ENCODE measurements at regions of chr1 and their contacts with region 1.

Region 1: GRCh38 chr1:145978854-145979759 is 14.6 kb downstream of the POLR3GL start:
- DNase-seq: peak; percentile 98 to 99
- ATAC-seq: peak; percentile 75 to 76
- H3K4me3 ChIP-seq: peak overlapping the region; percentile 36 to 47 (median 42)
- H3K27ac ChIP-seq: peak overlapping the region; percentile 95 to 99 (median 98)
- H3K4me1 ChIP-seq: peaks cover 62% of the 10 kb centered on the region in 2 donors
- H3K27me3 ChIP-seq: no peaks in the 10 kb centered on the region
- CTCF ChIP-seq: peak in 4 of 5 experiments; percentile 29 to 42 (median 31)
- POLR2A ChIP-seq: peak; percentile 72 to 91

Region 2: GRCh38 chr1:145425436-145426029 is 553.6 kb before region 1 on chr1 and contains the start of gene NBPF20:
- in situ Hi-C with region 1: no loop called
- intact Hi-C with region 1: no loop called
- DNase-seq: peak; percentile 40 to 62
- ATAC-seq: peak; percentile 73 to 94
- H3K4me3 ChIP-seq: peak within 1 kb of the TSS; percentile 71 to 85 (median 80)
- H3K27ac ChIP-seq: peak within 1 kb of the TSS; percentile 46 to 77 (median 70)
- H3K4me1 ChIP-seq: peaks cover 0 to 9% of the 10 kb centered on the region in 2 donors
- H3K27me3 ChIP-seq: peaks cover 16 to 35% (median 31%) of the 10 kb centered on the region in 3 donors
- CTCF ChIP-seq: no peak
- POLR2A ChIP-seq: no peak
- total RNA-seq, gene NBPF20: 0.20 to 0.92 (median 0.55) TPM

Region 3: DNA sequence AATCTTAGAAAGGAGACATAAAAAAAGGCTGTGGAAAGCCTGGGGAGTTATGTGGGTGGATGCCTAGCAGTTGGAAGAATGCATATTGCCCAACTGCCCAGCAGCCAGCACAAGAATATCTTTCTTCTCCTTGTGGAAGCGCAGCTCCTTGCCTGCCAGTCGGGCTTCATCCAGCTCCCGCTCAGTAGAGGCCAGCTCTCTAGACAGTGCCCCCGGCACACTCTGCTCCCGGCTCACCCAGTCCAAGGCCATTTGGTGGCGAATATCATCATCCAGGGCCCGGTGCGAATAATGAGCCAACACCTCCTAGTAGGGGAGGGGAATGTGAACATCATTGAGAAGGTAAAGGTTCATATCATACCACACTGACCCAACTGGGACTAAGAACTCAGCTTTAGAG is 42.9 kb before region 1 on chr1:
- in situ Hi-C with region 1: no loop called
- intact Hi-C with region 1: no loop called
- DNase-seq: peak in 1 of 2 donors; percentile 81
- ATAC-seq: peak; percentile 72 to 93
- H3K4me3 ChIP-seq: no peak overlapping the region
- H3K27ac ChIP-seq: peak overlapping the region; percentile 69 to 95 (median 82)
- H3K4me1 ChIP-seq: peaks cover 41 to 45% of the 10 kb centered on the region in 2 donors
- H3K27me3 ChIP-seq: no peaks in the 10 kb centered on the region
- CTCF ChIP-seq: no peak
- POLR2A ChIP-seq: peak in 1 of 2 donors; percentile 28

Region 4: GRCh38 chr1:145963995-145964901 is 14.9 kb before region 1 on chr1 and contains the starts of genes ANKRD34A and POLR3GL:
- in situ Hi-C with region 1: no loop called
- intact Hi-C with region 1: loop called (anchors 2 kb)
- DNase-seq: peak; percentile 97
- ATAC-seq: peak; percentile 81 to 88
- H3K4me3 ChIP-seq: peak within 1 kb of the TSS; percentile 67 to 82 (median 73)
- H3K27ac ChIP-seq: peak within 1 kb of the TSS; percentile 88 to 99 (median 96)
- H3K4me1 ChIP-seq: peaks cover 28 to 34% of the 10 kb centered on the region in 2 donors
- H3K27me3 ChIP-seq: no peaks in the 10 kb centered on the region
- CTCF ChIP-seq: peak in 1 of 5 experiments; percentile 1
- POLR2A ChIP-seq: peak; percentile 91 to 97
- total RNA-seq, gene ANKRD34A: 3.3 to 19.0 (median 6.7) TPM
- total RNA-seq, gene POLR3GL: 43.5 to 78.8 (median 59.4) TPM

Region 5: GRCh38 chr1:145996433-145997015 is 17.4 kb after region 1 on chr1 and contains the start of gene TXNIP:
- in situ Hi-C with region 1: no loop called
- intact Hi-C with region 1: loop called (anchors 1 kb)
- DNase-seq: peak; percentile 99 to 100
- ATAC-seq: peak; percentile 61 to 74
- H3K4me3 ChIP-seq: peak within 1 kb of the TSS; percentile 63 to 98 (median 81)
- H3K27ac ChIP-seq: peak within 1 kb of the TSS; percentile 95 to 99 (median 98)
- H3K4me1 ChIP-seq: peaks cover 8 to 25% of the 10 kb centered on the region in 2 donors
- H3K27me3 ChIP-seq: no peaks in the 10 kb centered on the region
- CTCF ChIP-seq: no peak
- POLR2A ChIP-seq: peak; percentile 94 to 96
- total RNA-seq, gene TXNIP: 1,815 to 2,839 (median 2,202) TPM

Region 6: DNA sequence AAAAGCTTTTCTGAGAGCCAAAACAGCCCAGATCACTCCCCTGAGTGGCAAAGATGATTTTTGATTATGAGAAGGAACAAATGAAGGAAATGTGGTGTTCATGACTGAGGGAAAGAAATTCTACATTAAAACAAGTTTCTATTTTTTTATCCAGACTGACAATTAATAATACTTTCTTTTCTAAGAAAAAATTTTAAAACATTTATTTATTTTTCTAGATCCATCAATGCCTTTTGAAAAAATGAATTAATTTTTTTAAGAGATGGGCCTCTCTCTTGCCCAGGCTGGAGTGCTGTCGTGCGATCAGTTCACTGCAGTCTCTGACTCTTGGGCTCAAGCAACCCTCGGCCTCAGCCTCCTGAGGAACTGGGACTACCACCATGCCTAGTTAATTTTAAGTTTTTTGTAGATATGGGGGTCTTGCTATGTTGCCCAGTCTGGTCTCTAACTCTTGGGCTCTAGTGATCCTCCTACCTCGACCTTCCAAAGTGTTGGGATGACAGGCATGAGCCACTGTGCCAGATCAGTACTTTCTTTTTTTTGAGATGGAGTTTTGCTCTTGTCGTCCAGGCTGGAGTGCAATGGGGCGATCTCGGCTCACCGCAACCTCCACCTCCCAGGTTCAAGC is 28.5 kb after region 1 on chr1:
- in situ Hi-C with region 1: loop called (anchors 5 kb)
- intact Hi-C with region 1: loop called (anchors 1 kb)
- DNase-seq: no peak
- ATAC-seq: no peak
- H3K4me3 ChIP-seq: peak overlapping the region; percentile 8 to 34 (median 22)
- H3K27ac ChIP-seq: peak overlapping the region; percentile 95 to 99 (median 96)
- H3K4me1 ChIP-seq: peaks cover 32 to 46% of the 10 kb centered on the region in 2 donors
- H3K27me3 ChIP-seq: no peaks in the 10 kb centered on the region
- CTCF ChIP-seq: no peak
- POLR2A ChIP-seq: no peak

Region 7: DNA sequence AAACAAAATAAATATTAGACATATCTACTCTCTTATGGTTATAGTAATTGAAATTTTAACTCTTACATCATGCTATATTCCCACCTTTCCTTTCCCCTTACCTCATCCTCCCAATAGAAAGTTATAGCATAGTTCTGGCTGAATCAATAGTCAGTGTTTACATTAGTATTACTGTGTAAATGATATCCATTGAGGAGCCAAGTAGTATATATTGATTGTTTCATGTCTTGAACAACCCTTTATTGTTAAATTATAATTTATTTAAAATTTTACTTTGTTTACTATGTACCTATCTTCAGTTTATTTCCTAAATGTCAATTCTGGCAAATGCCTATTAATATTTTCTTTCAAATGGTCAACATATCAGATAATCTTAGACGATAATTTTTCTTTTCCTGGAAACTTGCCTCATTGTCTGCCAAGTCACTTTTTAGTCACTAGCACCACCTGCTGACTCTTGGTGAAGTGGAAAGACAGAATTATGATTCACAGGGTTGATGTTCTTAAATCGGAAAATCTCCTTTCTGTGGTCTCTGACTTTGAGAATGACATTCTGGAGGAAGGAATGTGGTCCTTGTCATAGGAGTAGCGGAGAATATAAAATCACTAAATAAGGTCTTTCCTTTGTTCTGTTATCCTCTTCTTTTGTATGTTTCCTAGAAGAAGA is 33.8 kb after region 1 on chr1:
- in situ Hi-C with region 1: loop called (anchors 5 kb)
- intact Hi-C with region 1: loop called (anchors 1 kb)
- DNase-seq: no peak
- ATAC-seq: peak; percentile 68 to 75
- H3K4me3 ChIP-seq: no peak overlapping the region
- H3K27ac ChIP-seq: peak overlapping the region; percentile 7 to 40 (median 20)
- H3K4me1 ChIP-seq: peaks cover 6 to 17% of the 10 kb centered on the region in 2 donors
- H3K27me3 ChIP-seq: no peaks in the 10 kb centered on the region
- CTCF ChIP-seq: peak; percentile 67 to 77 (median 73)
- POLR2A ChIP-seq: no peak

Region 8: GRCh38 chr1:147234777-147235176 is 1255.7 kb after region 1 on chr1:
- in situ Hi-C with region 1: no loop called
- intact Hi-C with region 1: no loop called
- DNase-seq: no peak
- ATAC-seq: no peak
- H3K4me3 ChIP-seq: no peak overlapping the region
- H3K27ac ChIP-seq: no peak overlapping the region
- H3K4me1 ChIP-seq: no peaks in the 10 kb centered on the region
- H3K27me3 ChIP-seq: no peaks in the 10 kb centered on the region
- CTCF ChIP-seq: no peak
- POLR2A ChIP-seq: no peak